ENCODE measurements at regions of chr22 and their contacts with region 1.

Region 1: DNA sequence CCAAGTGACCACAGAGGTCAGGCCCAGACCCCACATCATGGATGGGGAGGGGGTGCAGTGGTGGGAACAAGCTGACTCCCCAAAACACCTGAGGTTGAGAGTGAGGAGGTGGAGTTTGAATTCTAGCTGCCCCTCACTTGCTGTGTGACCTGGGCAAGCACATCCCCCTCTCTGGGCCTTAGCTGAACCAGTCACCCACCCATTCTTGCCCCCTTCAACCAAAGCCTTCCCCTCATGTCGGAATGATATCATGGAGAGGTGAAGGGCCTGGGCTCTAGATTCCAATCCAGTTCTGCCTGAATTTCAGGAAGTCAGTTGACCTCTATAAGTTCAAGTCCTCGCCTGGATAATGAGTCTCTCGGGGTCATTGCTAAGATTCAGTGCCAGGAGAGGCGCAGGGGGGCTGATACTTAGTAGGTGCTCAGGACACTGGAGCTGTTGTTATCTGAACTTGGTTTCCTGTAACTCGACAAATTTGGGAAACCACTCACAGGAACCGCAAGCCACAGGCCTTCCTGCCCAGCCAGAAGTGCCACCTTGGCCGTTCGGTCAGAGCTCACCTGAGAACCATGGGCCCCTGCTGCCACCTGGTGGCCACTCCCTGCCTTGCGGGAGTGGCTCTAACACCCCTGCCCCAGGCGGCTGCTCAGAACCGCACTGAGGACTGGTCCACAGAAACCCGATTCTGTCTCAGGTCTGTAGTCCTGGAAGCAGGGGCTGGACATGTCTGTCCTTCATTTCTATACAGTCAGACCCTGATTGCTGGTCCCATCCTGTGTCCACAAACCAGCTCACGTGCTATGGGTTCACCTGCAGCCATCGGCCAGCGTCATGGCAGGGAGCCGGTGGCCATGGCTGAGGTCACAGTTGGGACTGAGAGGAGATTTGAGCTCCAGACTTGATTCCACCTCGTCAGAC is 6.9 kb downstream of the CDC42EP1 start:
- DNase-seq: peak in 1 of 2 experiments; percentile 98
- H3K4me3 ChIP-seq: no peak overlapping the region
- H3K27ac ChIP-seq: no peak overlapping the region
- H3K4me1 ChIP-seq: peaks cover 13 to 35% (median 20%) of the 10 kb centered on the region in 4 experiments
- H3K27me3 ChIP-seq: no peaks in the 10 kb centered on the region; a peak in 1 of 7 replicates
- CTCF ChIP-seq: peak; percentile 89 to 98 (median 98)
- EP300 ChIP-seq: no peak
- POLR2A ChIP-seq: no peak
- RAD21 ChIP-seq: peak; percentile 99 to 100

Region 2: DNA sequence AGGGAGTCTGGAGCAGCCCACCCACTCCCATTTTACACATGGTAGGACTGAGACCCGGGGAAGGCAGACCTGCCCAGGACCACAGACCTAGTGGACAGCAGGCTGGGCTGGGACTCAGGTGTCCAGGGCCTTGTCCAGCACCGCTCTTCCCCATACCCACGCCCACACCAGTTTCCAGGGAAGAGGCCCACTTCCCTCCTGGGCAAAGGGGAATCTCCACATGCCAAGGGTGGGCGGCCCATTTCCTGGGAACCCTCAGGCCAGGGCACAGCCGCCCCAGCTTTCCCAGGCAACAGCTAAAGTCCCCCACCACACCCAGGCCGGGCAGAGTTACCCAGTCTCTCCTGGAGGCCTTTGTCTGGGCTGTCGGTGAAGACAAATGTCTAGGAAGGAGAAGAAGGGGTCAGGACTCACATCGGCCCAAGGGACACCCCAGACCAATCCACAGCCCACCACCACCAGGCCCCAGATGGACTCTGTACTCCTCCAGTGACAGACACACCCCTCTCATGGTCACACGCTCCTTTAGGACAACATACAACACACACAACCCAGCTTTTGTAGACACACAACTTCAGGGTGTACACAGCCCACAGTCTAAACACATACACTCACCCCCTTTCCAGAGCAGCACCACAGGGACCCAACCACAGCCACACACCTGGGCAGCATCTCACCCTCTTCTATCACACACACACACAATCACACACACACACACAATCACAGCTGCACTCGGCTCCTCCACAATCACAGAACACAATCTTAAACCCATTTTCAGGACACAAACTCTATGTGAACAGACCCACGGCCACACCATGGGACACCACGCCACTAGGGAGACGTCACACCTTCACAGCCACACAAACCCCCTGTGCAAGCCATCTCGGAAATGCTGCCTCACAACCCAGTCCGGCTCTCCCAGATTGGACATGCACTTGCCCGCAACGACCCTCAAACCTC is 86.5 kb before region 1 on chr22:
- CTCF ChIA-PET with region 1: interaction called, 17 read pairs
- POLR2A ChIA-PET with region 1: interaction called, 4 read pairs
- DNase-seq: no peak
- H3K4me3 ChIP-seq: no peak overlapping the region
- H3K27ac ChIP-seq: no peak overlapping the region
- H3K4me1 ChIP-seq: peaks cover 0 to 10% (median 3%) of the 10 kb centered on the region in 4 experiments; a peak in 3 of 7 replicates
- H3K27me3 ChIP-seq: peaks cover 0 to 4% (median 0%) of the 10 kb centered on the region in 4 experiments; a peak in 1 of 7 replicates
- CTCF ChIP-seq: no peak
- EP300 ChIP-seq: no peak
- POLR2A ChIP-seq: no peak
- RAD21 ChIP-seq: no peak

Region 3: GRCh38 chr22:37529652-37530345 is 37.4 kb before region 1 on chr22:
- CTCF ChIA-PET with region 1: interaction called, 55 read pairs
- POLR2A ChIA-PET with region 1: interaction called, 3 read pairs
- DNase-seq: no peak
- H3K4me3 ChIP-seq: no peak overlapping the region
- H3K27ac ChIP-seq: no peak overlapping the region
- H3K4me1 ChIP-seq: no peaks in the 10 kb centered on the region
- H3K27me3 ChIP-seq: no peaks in the 10 kb centered on the region
- CTCF ChIP-seq: no peak
- EP300 ChIP-seq: no peak
- POLR2A ChIP-seq: no peak
- RAD21 ChIP-seq: no peak

Region 4: DNA sequence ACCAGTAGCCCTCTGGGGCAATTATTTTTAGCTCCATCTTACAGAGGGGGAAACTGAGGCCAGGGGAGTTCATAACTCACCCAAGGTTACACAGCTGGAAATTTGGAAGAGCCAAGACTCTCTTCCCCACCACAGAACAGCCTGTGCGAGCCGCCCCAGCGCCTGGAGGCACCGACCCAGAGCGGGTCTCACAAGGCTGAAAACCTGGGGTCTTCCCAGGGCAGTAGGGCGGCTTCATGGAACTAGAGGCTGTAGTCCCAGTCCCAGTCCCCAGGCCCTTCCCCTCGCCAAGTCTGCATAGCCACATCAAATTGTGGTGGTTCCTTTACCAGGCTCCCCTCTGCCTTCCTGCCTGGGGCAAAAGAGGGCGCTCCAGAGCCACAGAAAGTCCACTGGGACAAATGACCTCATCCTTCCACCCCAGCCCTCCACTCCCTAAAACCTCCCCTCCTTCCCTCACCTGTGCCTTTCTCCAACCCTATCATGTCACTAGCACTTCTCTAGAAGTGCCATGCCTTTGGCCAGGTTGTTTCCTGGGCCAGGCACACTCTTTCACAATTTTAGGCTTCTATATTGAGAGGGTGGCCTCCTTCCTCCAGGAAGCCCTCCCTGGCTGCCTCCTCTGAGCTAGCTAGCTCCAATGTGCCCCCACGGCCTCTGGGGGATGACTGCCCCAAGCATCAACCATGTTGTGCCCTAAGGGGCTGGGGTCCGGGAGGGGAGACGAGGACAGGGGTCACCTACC is 22.0 kb before region 1 on chr22:
- CTCF ChIA-PET with region 1: interaction called, 1,347 read pairs
- POLR2A ChIA-PET with region 1: interaction called, 198 read pairs
- DNase-seq: peak; percentile 61 to 95
- H3K4me3 ChIP-seq: peak overlapping the region in 3 of 4 experiments; percentile 15 to 57 (median 24); a peak in 4 of 8 replicates
- H3K27ac ChIP-seq: peak overlapping the region; percentile 49; the same call in 1 of the 2 replicates
- H3K4me1 ChIP-seq: peaks cover 5 to 17% (median 11%) of the 10 kb centered on the region in 4 experiments
- H3K27me3 ChIP-seq: no peaks in the 10 kb centered on the region; a peak in 1 of 7 replicates
- CTCF ChIP-seq: peak; percentile 86 to 96 (median 89)
- EP300 ChIP-seq: no peak
- POLR2A ChIP-seq: no peak
- RAD21 ChIP-seq: peak; percentile 90 to 91

Region 5: DNA sequence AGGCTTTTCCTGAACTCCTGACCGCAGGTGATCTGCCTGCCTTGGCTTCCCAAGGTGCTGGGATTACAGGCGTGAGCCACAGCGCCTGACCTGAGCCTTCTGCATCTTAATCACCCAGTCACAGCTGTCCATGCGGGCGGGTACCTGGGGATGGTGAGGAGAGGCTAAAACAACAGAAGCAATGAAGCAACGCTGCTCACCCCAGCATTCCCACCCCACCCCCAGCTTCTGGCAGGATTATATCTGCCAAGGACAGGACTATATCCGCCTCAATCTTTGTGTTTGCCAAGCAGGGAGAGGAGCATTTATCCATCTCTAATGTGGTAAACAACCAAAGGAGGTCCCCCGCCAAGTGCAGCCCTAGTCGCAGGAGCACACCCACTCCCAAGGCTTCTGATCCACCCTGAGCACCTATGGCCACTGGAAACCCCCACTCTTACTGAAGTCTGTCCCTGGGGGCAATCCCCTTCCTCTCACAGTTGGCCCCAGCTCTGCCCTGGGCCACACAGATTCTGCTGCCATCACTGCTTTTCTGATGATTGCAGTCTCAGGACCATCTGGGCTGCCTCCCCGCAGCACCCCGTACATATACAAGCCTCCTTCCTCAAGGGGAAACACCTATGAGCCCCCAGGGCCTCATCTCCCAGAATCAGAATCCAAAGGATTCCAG is 21.5 kb after region 1 on chr22:
- CTCF ChIA-PET with region 1: interaction called, 185 read pairs
- POLR2A ChIA-PET with region 1: interaction called, 11 read pairs
- DNase-seq: no peak
- H3K4me3 ChIP-seq: no peak overlapping the region
- H3K27ac ChIP-seq: no peak overlapping the region
- H3K4me1 ChIP-seq: peaks cover 0 to 10% (median 2%) of the 10 kb centered on the region in 4 experiments; a peak in 4 of 7 replicates
- H3K27me3 ChIP-seq: no peaks in the 10 kb centered on the region
- CTCF ChIP-seq: no peak
- EP300 ChIP-seq: no peak
- POLR2A ChIP-seq: no peak
- RAD21 ChIP-seq: no peak

Region 6: DNA sequence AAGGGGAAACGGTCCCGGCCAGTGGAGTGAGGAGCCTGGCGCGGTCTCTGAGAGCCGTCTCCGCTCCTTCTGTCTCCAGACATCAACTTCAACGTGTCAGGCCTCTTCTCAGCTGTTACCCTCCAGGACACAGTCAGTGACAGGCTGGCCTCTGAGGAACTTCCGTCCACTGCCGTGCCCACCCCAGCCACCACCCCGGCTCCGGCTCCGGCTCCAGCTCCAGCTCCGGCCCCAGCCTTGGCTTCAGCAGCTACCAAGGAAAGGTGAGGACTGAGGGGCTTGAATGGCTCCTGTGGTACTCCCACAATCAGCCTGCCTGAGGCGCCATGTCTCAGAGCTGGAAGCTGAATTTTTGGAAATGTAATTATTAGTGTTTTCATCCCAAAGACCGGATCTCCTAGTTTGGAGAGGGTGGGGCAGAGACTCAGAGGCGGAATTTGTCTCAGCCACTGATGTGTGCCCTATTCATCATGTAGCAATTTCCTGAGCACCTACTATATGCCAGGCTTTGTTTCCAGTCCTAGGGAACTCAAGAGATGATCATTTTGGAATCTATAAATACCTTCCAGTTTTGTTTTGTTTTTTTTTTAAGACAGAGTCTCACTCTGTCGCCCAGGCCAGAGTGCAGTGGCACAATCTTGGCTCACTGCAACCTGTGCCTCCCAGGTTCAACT is 83.4 kb after region 1 on chr22:
- CTCF ChIA-PET with region 1: no interaction called
- POLR2A ChIA-PET with region 1: no interaction called
- DNase-seq: no peak
- H3K4me3 ChIP-seq: no peak overlapping the region
- H3K27ac ChIP-seq: no peak overlapping the region
- H3K4me1 ChIP-seq: no peaks in the 10 kb centered on the region
- H3K27me3 ChIP-seq: no peaks in the 10 kb centered on the region
- CTCF ChIP-seq: no peak
- EP300 ChIP-seq: no peak
- POLR2A ChIP-seq: no peak
- RAD21 ChIP-seq: no peak

Region 7: GRCh38 chr22:37708580-37709444 is 141.7 kb after region 1 on chr22:
- CTCF ChIA-PET with region 1: no interaction called
- POLR2A ChIA-PET with region 1: no interaction called
- DNase-seq: no peak
- H3K4me3 ChIP-seq: no peak overlapping the region
- H3K27ac ChIP-seq: no peak overlapping the region
- H3K4me1 ChIP-seq: peaks cover 0 to 5% (median 0%) of the 10 kb centered on the region in 4 experiments; a peak in 1 of 7 replicates
- H3K27me3 ChIP-seq: no peaks in the 10 kb centered on the region
- CTCF ChIP-seq: no peak
- EP300 ChIP-seq: no peak
- POLR2A ChIP-seq: no peak
- RAD21 ChIP-seq: no peak